Sciatic nerve (tissue), 2 donors: ENCODE measurements at regions of chr5 and their contacts with region 1.

Region 1: DNA sequence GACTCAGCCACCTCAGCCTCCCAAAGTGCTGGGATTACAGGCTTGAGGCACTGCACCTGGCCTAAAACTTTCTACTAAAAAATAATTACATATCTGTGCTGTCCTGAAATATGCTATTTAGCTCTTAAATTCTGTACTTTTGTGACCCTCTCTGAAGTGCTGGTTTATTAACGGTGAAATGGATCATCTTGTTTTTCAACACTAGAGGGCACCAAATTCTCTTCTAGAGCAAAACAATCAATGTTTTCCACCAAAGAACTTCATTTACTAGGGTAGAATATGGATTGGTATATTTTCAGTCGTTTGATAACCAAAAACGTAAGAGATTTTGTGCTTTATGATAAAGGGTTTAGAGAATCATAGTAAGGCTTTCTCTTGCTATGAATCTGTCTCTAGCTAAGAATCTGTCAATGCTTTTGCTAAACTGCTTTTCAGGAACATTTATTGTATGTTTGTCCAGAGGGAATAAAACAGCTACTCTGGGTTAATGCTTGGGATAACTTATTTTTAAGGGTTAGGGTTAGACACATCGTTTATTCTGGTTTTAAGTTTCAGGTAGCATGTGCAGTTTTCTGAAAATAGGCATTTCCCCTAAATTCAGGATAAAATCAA is 63.6 kb downstream of the RNF180 start:
- DNase-seq: no peak
- ATAC-seq: no peak

Region 2: GRCh38 chr5:64190562-64191306 is 38.5 kb before region 1 on chr5:
- intact Hi-C with region 1: no loop called
- DNase-seq: no peak
- ATAC-seq: no peak

Region 3: GRCh38 chr5:64603676-64604075 is 374.4 kb after region 1 on chr5:
- intact Hi-C with region 1: loop called (anchors 10 kb)
- DNase-seq: no peak
- ATAC-seq: no peak

Region 4: DNA sequence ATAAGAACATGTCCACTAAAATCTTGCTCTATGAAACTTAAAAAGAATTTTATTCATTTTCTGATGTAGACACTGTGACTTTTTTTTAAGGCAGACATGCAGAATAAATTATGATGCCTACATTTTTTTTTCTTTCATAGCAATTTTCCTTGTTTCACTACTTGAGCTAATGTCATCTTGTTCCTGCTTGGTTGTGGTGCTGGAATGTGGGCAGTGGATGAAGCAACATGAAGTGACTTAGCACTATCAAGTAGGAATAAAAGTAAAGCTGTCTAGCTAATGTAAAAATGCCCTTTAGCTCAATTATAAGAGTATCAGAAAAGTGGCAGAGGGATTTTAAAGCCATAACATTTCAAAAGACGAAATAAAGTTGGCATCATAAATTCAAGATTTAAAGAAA is 1061.4 kb after region 1 on chr5:
- intact Hi-C with region 1: no loop called
- DNase-seq: no peak
- ATAC-seq: no peak